Naive thymus-derived CD8-positive, alpha-beta T cell (primary cell): ENCODE measurements at regions of chr3 and their contacts with region 1.

Region 1: DNA sequence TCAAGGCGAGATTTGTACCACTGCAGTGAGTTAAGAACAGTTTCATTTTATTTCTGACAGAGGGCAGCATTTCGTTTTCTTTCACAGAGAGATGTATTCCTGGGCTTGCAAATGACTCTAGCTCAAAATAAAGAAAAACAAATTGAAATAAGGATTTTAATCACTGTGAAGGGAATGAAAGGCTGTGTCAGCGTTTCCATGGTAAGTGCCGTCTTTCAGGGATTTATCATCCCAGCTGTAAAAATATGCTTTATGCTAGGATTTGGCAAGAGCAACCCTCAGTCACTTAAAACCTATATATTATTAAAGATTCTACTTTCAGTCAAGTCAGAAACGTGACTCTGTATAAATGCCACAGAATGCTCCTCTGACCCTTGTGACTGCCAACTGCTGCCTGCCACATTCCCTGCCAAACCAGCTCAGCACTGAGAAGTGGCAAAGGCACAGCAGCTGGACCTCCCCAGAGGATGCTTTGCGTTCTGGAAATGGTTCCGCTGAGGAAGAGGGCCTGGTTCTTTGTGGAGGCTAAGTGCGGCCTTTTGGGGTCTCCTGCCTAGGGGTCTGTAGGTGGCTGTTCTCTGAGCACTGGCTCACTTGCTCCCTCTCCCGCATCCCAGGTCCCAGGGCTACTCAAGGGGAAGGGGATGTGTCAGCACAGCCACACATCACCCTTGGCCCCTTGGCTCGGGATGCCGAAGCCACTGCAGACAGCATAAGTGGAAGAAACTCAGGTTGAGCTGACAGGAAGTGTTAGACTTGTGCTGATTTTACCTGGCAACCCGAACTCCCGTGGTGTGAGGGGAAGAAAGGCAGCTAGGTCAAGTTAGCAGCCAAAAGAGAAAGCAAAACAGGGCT is 56.6 kb upstream of the POMGNT2 start:
- DNase-seq: peak; percentile 22 to 82 (median 63)
- ATAC-seq: peak; percentile 91 to 95
- H3K4me3 Mint-ChIP-seq: peak overlapping the region; percentile 69 to 93 (median 88)
- H3K27ac Mint-ChIP-seq: peak overlapping the region; percentile 96 to 100 (median 99)
- H3K4me1 Mint-ChIP-seq: peaks cover 14 to 40% (median 25%) of the 10 kb centered on the region in 4 donors
- H3K27me3 Mint-ChIP-seq: no peaks in the 10 kb centered on the region

Region 2: GRCh38 chr3:43190666-43191065 is 28.2 kb after region 1 on chr3:
- POLR2A ChIA-PET with region 1: interaction called, 19 read pairs
- DNase-seq: no peak
- ATAC-seq: no peak
- H3K4me3 Mint-ChIP-seq: no peak overlapping the region
- H3K27ac Mint-ChIP-seq: peak overlapping the region in 4 of 10 donors; percentile 8 to 49 (median 25)
- H3K4me1 Mint-ChIP-seq: peaks cover 43 to 60% (median 44%) of the 10 kb centered on the region in 4 donors
- H3K27me3 Mint-ChIP-seq: no peaks in the 10 kb centered on the region

Region 3: GRCh38 chr3:43223670-43224364 is 61.4 kb after region 1 on chr3:
- POLR2A ChIA-PET with region 1: interaction called, 30 read pairs
- DNase-seq: peak in 3 of 10 donors; percentile 41 to 52 (median 42)
- ATAC-seq: peak in 1 of 2 donors; percentile 23
- H3K4me3 Mint-ChIP-seq: peak overlapping the region in 7 of 10 donors; percentile 15 to 82 (median 51)
- H3K27ac Mint-ChIP-seq: peak overlapping the region; percentile 36 to 95 (median 85)
- H3K4me1 Mint-ChIP-seq: peaks cover 34 to 69% (median 62%) of the 10 kb centered on the region in 4 donors
- H3K27me3 Mint-ChIP-seq: no peaks in the 10 kb centered on the region

Region 4: DNA sequence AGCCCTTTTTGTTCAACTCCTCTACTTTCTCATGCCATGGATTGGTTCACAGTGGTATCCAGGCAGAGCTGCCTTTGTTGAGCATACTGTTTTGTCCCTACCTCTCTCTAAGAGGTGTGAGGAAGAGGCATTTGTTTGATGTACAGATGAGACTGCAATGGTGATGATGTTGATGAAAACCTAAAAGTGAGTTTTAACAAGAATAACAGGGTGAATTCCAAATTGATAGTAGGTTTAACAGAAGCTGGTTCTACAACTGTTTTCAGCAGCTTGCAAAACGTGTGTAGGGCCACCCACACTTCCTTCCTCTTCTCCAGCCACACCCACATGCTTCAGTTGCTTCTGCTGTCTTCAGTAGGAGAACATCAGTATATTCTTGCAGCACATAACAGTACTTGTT is 134.1 kb after region 1 on chr3:
- POLR2A ChIA-PET with region 1: interaction called, 16 read pairs
- DNase-seq: peak; percentile 32 to 90 (median 76)
- ATAC-seq: peak; percentile 87 to 92
- H3K4me3 Mint-ChIP-seq: peak overlapping the region; percentile 79 to 95 (median 88)
- H3K27ac Mint-ChIP-seq: peak overlapping the region; percentile 94 to 99 (median 97)
- H3K4me1 Mint-ChIP-seq: peaks cover 28 to 87% (median 67%) of the 10 kb centered on the region in 4 donors
- H3K27me3 Mint-ChIP-seq: no peaks in the 10 kb centered on the region